GM10248 (cell line): ENCODE measurements at regions of chr6 and their contacts with region 1.

Region 1: DNA sequence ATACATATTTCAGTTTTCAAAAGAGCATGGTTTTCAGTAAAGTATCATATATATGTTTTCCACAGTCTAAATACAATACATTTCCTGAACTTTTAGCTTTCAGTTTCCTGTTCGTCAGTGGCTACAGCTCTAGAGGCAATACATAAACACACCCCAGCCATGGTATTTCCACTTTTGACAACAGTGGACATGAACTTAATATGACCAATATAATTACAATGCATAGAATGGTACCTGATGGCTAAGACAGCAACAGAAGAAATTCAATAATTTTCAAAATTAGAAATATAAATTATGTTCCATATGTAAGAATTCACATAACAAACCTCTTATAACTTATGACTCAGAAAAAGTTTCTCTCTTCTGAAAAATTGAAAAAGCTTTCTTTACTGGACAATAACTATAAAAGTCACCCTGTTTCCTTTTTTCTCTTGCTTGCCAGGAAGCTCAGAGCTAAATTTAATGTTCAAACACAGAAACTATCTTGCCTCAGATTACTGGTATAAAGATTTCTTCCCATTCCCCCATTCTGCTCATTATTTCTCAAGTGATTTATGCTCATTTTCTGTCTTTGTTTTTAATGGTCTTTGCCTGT is 19.2 kb downstream of the FKBP5 start:
- DNase-seq: no peak
- CTCF ChIP-seq: no peak

Region 2: GRCh38 chr6:35687658-35688580 is 18.4 kb after region 1 on chr6:
- CTCF ChIA-PET with region 1: interaction called, 10 read pairs
- POLR2A ChIA-PET with region 1: no interaction called
- DNase-seq: peak; percentile 53
- CTCF ChIP-seq: no peak